ENCODE measurements at regions of chr11 and their contacts with region 1.

Region 1: GRCh38 chr11:12318791-12319438 is 58.5 kb upstream of the PARVA start:
- DNase-seq: no peak
- H3K4me3 Mint-ChIP-seq: no peak overlapping the region
- H3K27ac Mint-ChIP-seq: no peak overlapping the region
- H3K4me1 Mint-ChIP-seq: no peaks in the 10 kb centered on the region
- H3K27me3 Mint-ChIP-seq: no peaks in the 10 kb centered on the region
- CTCF ChIP-seq: no peak

Region 2: DNA sequence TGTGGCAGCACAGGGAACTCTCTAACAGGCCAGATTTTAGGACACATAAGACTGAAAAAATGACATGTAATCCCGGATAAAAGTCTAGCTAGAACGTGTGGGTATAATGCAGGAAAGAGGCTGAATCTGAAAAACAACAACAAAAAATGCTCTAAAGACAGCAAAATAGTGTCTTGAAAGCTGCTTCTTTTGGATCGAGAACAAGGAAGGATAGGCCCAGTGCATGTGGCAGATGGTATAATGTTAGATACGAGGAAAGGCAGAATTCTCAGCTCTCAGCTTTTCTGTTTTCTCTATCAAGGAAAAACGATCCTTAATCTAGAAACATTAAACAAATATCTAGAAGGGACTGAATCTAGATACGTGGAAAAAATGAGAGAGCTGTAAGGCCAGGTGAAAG is 24.6 kb after region 1 on chr11:
- CTCF ChIA-PET with region 1: no interaction called
- intact Hi-C with region 1: loop called (anchors 1 kb)
- DNase-seq: no peak
- H3K4me3 Mint-ChIP-seq: no peak overlapping the region
- H3K27ac Mint-ChIP-seq: no peak overlapping the region
- H3K4me1 Mint-ChIP-seq: no peaks in the 10 kb centered on the region
- H3K27me3 Mint-ChIP-seq: no peaks in the 10 kb centered on the region
- CTCF ChIP-seq: no peak

Region 3: GRCh38 chr11:12376259-12377081 is 57.6 kb after region 1 on chr11:
- CTCF ChIA-PET with region 1: no interaction called
- intact Hi-C with region 1: no loop called
- DNase-seq: no peak
- H3K4me3 Mint-ChIP-seq: peak overlapping the region; percentile 89
- H3K27ac Mint-ChIP-seq: peak overlapping the region; percentile 52
- H3K4me1 Mint-ChIP-seq: peaks cover 11% of the 10 kb centered on the region
- H3K27me3 Mint-ChIP-seq: no peaks in the 10 kb centered on the region
- CTCF ChIP-seq: no peak

Region 4: DNA sequence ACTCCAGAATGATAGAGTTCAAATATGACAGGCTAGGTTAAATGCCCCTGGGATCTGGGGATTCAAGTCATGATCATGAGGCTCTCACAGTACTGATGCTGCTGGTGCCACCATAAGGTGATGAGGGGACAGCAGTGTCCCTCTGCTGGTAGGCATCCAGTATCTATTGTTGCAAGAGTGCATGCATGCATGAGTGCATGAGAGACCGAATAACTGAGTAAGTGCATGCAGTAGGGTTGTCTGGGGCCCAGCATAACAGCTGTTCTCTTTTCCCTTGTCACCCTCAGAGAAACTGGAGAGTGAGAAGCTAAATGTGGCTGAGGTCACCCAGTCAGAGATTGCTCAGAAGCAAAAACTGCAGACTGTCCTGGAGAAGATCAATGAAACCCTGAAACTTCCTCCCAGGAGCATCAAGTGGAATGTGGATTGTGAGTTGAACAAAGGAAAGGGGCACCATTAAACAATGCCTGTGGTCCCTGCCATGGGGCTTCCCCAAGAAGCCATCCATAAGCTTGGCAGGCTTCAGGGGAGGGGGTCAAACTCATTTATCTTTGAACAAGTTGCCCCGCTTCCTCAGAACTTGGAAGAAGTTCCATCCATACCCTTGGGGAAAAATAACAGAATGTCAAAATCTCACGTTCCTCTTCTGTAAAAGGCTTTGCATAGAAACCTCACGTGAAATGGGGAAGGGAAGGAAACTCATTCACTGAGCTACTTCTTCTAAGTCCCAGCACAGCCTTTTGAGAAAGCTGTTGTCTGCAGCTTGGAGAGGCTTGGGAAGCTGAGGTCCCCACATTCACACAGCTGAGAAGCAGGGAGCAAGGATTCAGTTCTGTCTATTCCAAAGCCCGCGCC is 177.5 kb after region 1 on chr11:
- CTCF ChIA-PET with region 1: no interaction called
- intact Hi-C with region 1: no loop called
- DNase-seq: no peak
- H3K4me3 Mint-ChIP-seq: no peak overlapping the region
- H3K27ac Mint-ChIP-seq: no peak overlapping the region
- H3K4me1 Mint-ChIP-seq: no peaks in the 10 kb centered on the region
- H3K27me3 Mint-ChIP-seq: no peaks in the 10 kb centered on the region
- CTCF ChIP-seq: no peak

Region 5: DNA sequence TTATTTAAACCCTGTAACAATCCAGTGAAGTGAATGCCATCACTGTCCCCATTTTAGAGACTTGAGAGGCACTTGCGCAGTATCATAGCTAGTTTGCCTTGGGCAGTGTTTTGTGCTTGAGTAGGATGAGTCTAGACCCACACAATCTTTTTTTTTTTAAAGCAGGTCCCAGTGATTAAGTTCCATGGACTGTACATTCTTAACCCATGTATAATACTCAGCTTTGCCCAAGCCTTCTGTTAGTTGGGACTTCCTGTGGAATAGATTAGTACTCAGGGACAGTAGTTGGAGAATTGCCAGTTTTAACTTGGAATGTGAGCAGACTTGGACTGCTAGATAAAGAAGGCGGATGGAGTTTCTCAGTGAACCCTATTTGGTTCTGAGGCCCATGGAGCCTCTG is 581.6 kb after region 1 on chr11:
- CTCF ChIA-PET with region 1: no interaction called
- intact Hi-C with region 1: no loop called
- DNase-seq: no peak
- H3K4me3 Mint-ChIP-seq: no peak overlapping the region
- H3K27ac Mint-ChIP-seq: no peak overlapping the region
- H3K4me1 Mint-ChIP-seq: peaks cover 11% of the 10 kb centered on the region
- H3K27me3 Mint-ChIP-seq: no peaks in the 10 kb centered on the region
- CTCF ChIP-seq: no peak

Measured in Calu3 (cell line).